H1 (cell line): ENCODE measurements at regions of chr18 and their contacts with region 1.

Region 1: DNA sequence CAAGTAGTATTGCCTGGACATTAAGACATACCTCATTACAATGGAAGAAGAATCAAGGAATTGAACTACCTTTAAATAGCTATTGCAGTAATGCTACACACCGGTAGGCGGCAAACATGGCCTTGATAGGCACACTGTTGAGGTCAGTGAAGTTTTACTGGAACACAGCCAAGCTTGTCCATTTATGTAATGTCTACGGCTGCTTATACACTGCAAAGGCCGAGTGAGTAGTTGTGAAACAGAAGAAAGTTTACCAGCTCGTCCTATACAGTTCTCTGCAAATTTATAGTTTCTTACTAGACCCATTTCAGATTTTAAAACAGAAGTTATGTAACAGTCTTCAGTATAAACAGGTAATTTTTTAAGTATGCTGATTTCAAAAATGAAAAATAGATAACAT is 38.8 kb downstream of the PPP4R1 start:
- DNase-seq: peak in 1 of 2 experiments; percentile 58
- H3K4me3 ChIP-seq: no peak overlapping the region
- H3K27ac ChIP-seq: no peak overlapping the region
- H3K4me1 ChIP-seq: peaks cover 2 to 3% (median 3%) of the 10 kb centered on the region in 4 experiments; a peak in 5 of 7 replicates
- H3K27me3 ChIP-seq: no peaks in the 10 kb centered on the region
- CTCF ChIP-seq: peak; percentile 27 to 79 (median 71)
- EP300 ChIP-seq: no peak
- POLR2A ChIP-seq: no peak
- RAD21 ChIP-seq: peak; percentile 74 to 83

Region 2: GRCh38 chr18:9516437-9517064 is 59.0 kb before region 1 on chr18:
- CTCF ChIA-PET with region 1: no interaction called
- POLR2A ChIA-PET with region 1: no interaction called
- DNase-seq: no peak
- H3K4me3 ChIP-seq: no peak overlapping the region
- H3K27ac ChIP-seq: no peak overlapping the region
- H3K4me1 ChIP-seq: 0 out of 7 replicates have a peak, but pooled peaks cover 0 to 3% (median 0%) of the 10 kb centered on the region in 4 experiments
- H3K27me3 ChIP-seq: no peaks in the 10 kb centered on the region
- CTCF ChIP-seq: peak in 2 of 3 experiments; percentile 63 to 84; a peak in 3 of 4 replicates
- EP300 ChIP-seq: no peak
- POLR2A ChIP-seq: no peak
- RAD21 ChIP-seq: peak; percentile 82 to 88

Region 3: GRCh38 chr18:9561759-9562158 is 13.8 kb before region 1 on chr18:
- CTCF ChIA-PET with region 1: interaction called, 42 read pairs
- POLR2A ChIA-PET with region 1: interaction called, 3 read pairs
- DNase-seq: no peak
- H3K4me3 ChIP-seq: no peak overlapping the region
- H3K27ac ChIP-seq: no peak overlapping the region
- H3K4me1 ChIP-seq: no peaks in the 10 kb centered on the region
- H3K27me3 ChIP-seq: peaks cover 0 to 1% (median 0%) of the 10 kb centered on the region in 4 experiments; a peak in 1 of 7 replicates
- CTCF ChIP-seq: no peak
- EP300 ChIP-seq: no peak
- POLR2A ChIP-seq: no peak
- RAD21 ChIP-seq: no peak

Region 4: GRCh38 chr18:9661564-9661963 is 86.0 kb after region 1 on chr18:
- CTCF ChIA-PET with region 1: interaction called, 12 read pairs
- POLR2A ChIA-PET with region 1: no interaction called
- DNase-seq: no peak
- H3K4me3 ChIP-seq: no peak overlapping the region
- H3K27ac ChIP-seq: no peak overlapping the region
- H3K4me1 ChIP-seq: no peaks in the 10 kb centered on the region
- H3K27me3 ChIP-seq: no peaks in the 10 kb centered on the region
- CTCF ChIP-seq: peak; percentile 35 to 53 (median 47)
- EP300 ChIP-seq: no peak
- POLR2A ChIP-seq: no peak
- RAD21 ChIP-seq: peak; percentile 65 to 77

Region 5: DNA sequence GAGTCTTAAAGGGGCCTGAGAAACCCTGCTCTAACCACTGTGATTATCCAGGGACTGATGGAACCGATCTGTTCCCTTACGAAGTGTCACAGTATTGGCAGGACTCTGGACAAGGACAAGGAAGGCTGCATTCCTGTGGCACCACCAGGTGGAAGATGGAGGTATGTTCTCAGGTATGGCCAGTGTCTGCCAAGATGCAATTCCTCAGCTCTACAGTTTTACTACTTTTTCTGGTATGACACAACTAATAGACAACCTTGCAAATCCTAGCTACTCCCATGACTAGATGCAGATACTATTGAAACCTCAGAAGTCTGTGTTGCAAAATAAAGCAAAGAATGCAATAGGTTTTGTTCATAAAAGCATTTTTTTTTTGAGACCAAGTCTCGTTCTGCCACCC is 147.1 kb after region 1 on chr18:
- CTCF ChIA-PET with region 1: interaction called, 14 read pairs
- POLR2A ChIA-PET with region 1: interaction called, 3 read pairs
- DNase-seq: peak in 1 of 2 experiments; percentile 48
- H3K4me3 ChIP-seq: no peak overlapping the region
- H3K27ac ChIP-seq: no peak overlapping the region
- H3K4me1 ChIP-seq: peaks cover 0 to 4% (median 2%) of the 10 kb centered on the region in 4 experiments; a peak in 3 of 7 replicates
- H3K27me3 ChIP-seq: no peaks in the 10 kb centered on the region
- CTCF ChIP-seq: peak; percentile 52 to 75 (median 58)
- EP300 ChIP-seq: no peak
- POLR2A ChIP-seq: no peak
- RAD21 ChIP-seq: peak; percentile 77 to 83